Psoas muscle (tissue), 8 donors: ENCODE measurements at regions of chr4 and their contacts with region 1.

Region 1: DNA sequence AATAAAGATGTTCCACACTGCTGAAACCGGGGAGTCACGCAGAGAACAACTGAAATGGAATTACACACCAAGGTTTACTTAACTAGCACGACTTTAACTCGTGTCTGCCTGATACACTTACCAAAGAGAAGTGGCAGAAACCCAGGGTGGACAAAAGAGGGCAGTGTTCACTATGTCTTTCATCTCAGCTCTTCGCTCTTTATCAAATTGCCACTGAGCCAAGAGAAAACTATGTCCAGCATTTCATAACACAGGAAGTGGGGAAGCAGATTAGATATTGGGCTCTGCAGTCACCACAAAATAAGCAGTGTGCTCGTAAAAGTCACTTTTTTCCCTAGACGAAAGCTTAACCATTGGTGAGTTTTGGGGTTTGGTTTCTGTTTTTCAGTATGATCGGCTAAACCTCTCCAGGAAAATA is 155.7 kb downstream of the CHIC2 start:
- DNase-seq: no peak
- ATAC-seq: peak; percentile 85 to 94 (median 89)
- H3K4me3 ChIP-seq: peak overlapping the region; percentile 44
- H3K27ac ChIP-seq: no peak overlapping the region
- H3K4me1 ChIP-seq: peaks cover 19% of the 10 kb centered on the region
- H3K27me3 ChIP-seq: peaks cover 0 to 16% (median 0%) of the 10 kb centered on the region in 3 donors
- CTCF ChIP-seq: peak; percentile 68

Region 2: DNA sequence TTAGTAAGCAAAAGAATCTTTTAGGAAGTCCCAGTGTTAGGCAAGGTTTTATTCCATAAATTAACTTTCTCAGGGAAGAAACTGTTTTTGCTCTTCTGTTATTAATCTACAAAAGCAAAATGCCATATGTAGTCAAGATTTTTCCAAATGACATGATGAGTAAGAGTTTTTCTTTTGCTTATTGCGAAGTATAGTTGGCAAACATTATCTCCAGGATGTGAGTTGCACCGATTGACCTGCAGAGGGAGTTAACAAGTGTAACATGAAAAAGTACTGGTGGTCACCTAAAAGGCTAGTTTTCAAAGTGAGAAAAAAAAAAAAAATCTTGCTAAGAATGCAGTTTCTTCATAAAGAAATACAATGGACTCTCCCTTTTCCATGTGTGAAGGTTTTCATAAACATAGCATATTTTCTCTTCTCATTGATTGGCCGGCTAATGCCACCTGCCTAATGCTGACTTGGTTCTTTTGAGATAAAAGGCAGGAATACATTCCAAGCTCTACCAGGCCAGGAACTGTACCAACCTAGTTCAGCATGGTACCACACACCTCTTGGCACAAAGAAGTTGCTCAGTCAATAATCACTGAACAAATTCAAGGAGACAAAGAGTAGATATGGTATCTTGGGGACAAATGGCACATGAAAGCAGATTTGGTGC is 417.6 kb before region 1 on chr4:
- intact Hi-C with region 1: loop called in 1 of 2 experiments (anchors 10 kb)
- DNase-seq: no peak
- ATAC-seq: peak in 3 of 4 donors; percentile 65 to 85 (median 65)
- H3K4me3 ChIP-seq: no peak overlapping the region
- H3K27ac ChIP-seq: no peak overlapping the region
- H3K4me1 ChIP-seq: peaks cover 11% of the 10 kb centered on the region
- H3K27me3 ChIP-seq: no peaks in the 10 kb centered on the region
- CTCF ChIP-seq: peak; percentile 71

Region 3: GRCh38 chr4:53702334-53703266 is 206.1 kb before region 1 on chr4:
- intact Hi-C with region 1: loop called in 1 of 2 experiments (anchors 10 kb)
- DNase-seq: peak; percentile 81 to 89
- ATAC-seq: peak; percentile 63 to 91 (median 79)
- H3K4me3 ChIP-seq: peak overlapping the region; percentile 51
- H3K27ac ChIP-seq: peak overlapping the region; percentile 18
- H3K4me1 ChIP-seq: peaks cover 10% of the 10 kb centered on the region
- H3K27me3 ChIP-seq: no peaks in the 10 kb centered on the region
- CTCF ChIP-seq: peak; percentile 3

Region 4: DNA sequence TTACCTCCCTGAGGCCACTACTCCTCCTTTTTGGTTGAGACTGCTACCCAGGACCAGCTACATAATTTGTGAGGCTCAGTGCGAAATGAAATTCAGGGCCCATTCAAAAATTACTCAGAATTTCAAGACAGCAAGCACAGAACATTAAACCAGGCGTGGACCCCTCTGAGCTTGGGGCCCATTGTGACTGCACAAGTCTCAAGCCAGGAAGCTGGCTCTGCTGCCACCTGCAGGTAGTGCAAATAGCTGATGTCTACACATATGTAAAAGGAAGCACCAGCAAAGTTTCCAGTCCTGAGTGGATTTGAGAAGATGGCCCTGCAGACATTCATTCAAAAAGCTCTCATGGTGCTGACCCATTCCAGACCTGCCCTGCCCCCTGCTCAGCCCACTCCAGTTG is 104.0 kb before region 1 on chr4:
- intact Hi-C with region 1: no loop called
- DNase-seq: peak in 1 of 2 donors; percentile 17
- ATAC-seq: peak in 2 of 4 donors; percentile 32 to 54
- H3K4me3 ChIP-seq: no peak overlapping the region
- H3K27ac ChIP-seq: no peak overlapping the region
- H3K4me1 ChIP-seq: no peaks in the 10 kb centered on the region
- H3K27me3 ChIP-seq: no peaks in the 10 kb centered on the region
- CTCF ChIP-seq: peak; percentile 41

Region 5: GRCh38 chr4:54217642-54218495 is 309.2 kb after region 1 on chr4:
- intact Hi-C with region 1: loop called in 1 of 2 experiments (anchors 2 kb)
- DNase-seq: peak; percentile 76 to 88
- ATAC-seq: peak; percentile 86 to 96 (median 94)
- H3K4me3 ChIP-seq: peak overlapping the region; percentile 61
- H3K27ac ChIP-seq: no peak overlapping the region
- H3K4me1 ChIP-seq: no peaks in the 10 kb centered on the region
- H3K27me3 ChIP-seq: peaks cover 0 to 9% (median 0%) of the 10 kb centered on the region in 3 donors
- CTCF ChIP-seq: peak; percentile 90

Region 6: GRCh38 chr4:54228056-54228527 is 319.4 kb after region 1 on chr4:
- intact Hi-C with region 1: loop called (anchors 5 kb)
- DNase-seq: peak; percentile 79 to 86
- ATAC-seq: peak; percentile 54 to 69 (median 60)
- H3K4me3 ChIP-seq: peak overlapping the region; percentile 58
- H3K27ac ChIP-seq: no peak overlapping the region
- H3K4me1 ChIP-seq: peaks cover 35% of the 10 kb centered on the region
- H3K27me3 ChIP-seq: peaks cover 0 to 95% (median 48%) of the 10 kb centered on the region in 3 donors
- CTCF ChIP-seq: peak; percentile 48

Region 7: DNA sequence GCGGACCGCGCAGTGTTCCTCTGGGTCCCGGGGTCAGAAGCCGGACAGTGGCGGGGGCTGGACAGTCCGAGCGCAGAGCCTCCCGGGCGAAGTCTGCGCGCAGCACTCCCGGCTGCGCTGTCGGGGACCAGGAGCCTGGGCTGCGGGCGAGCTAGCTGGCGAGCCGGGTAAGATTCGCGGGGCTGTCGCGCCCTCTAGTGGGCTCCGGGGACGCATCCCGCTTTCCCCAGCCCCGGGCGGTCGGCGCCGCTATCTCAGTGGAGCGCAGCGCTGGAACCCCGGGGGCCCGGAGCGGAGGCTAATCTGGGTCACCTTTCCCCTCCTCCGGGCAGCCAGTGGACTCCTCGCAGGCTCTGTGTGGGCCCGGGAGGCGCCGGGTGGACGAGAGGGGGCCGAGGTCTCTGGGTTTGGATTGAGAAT is 324.6 kb after region 1 on chr4:
- intact Hi-C with region 1: loop called (anchors 5 kb)
- DNase-seq: peak; percentile 88 to 92
- ATAC-seq: peak; percentile 91 to 94 (median 94)
- H3K4me3 ChIP-seq: peak overlapping the region; percentile 70
- H3K27ac ChIP-seq: no peak overlapping the region
- H3K4me1 ChIP-seq: peaks cover 28% of the 10 kb centered on the region
- H3K27me3 ChIP-seq: peaks cover 0 to 47% (median 27%) of the 10 kb centered on the region in 3 donors
- CTCF ChIP-seq: peak; percentile 82